ENCODE measurements at regions of chr16 and their contacts with region 1.

Region 1: GRCh38 chr16:15643048-15643945 is at the start of gene MARF1:
- DNase-seq: peak; percentile 99
- ATAC-seq: peak; percentile 80
- H3K4me3 Mint-ChIP-seq: peak within 1 kb of the TSS; percentile 92
- H3K27ac Mint-ChIP-seq: peak within 1 kb of the TSS; percentile 98
- H3K4me1 Mint-ChIP-seq: peaks cover 44% of the 10 kb centered on the region
- H3K27me3 Mint-ChIP-seq: no peaks in the 10 kb centered on the region
- CTCF ChIP-seq: peak; percentile 50
- total RNA-seq, gene MARF1: 55.7 to 56.0 TPM

Region 2: GRCh38 chr16:15427648-15428239 is 215.6 kb before region 1 on chr16:
- CTCF ChIA-PET with region 1: interaction called, 11 read pairs
- POLR2A ChIA-PET with region 1: no interaction called
- intact Hi-C with region 1: no loop called
- DNase-seq: peak; percentile 76
- ATAC-seq: peak; percentile 68
- H3K4me3 Mint-ChIP-seq: no peak overlapping the region
- H3K27ac Mint-ChIP-seq: no peak overlapping the region
- H3K4me1 Mint-ChIP-seq: peaks cover 3% of the 10 kb centered on the region
- H3K27me3 Mint-ChIP-seq: peaks cover 1% of the 10 kb centered on the region
- CTCF ChIP-seq: peak; percentile 66

Region 3: GRCh38 chr16:15518390-15519351 is 124.6 kb before region 1 on chr16:
- CTCF ChIA-PET with region 1: no interaction called
- POLR2A ChIA-PET with region 1: no interaction called
- intact Hi-C with region 1: no loop called
- DNase-seq: no peak
- ATAC-seq: no peak
- H3K4me3 Mint-ChIP-seq: no peak overlapping the region
- H3K27ac Mint-ChIP-seq: no peak overlapping the region
- H3K4me1 Mint-ChIP-seq: peaks cover 18% of the 10 kb centered on the region
- H3K27me3 Mint-ChIP-seq: no peaks in the 10 kb centered on the region
- CTCF ChIP-seq: no peak

Region 4: GRCh38 chr16:15592324-15592723 is 51.0 kb before region 1 on chr16:
- CTCF ChIA-PET with region 1: interaction called, 5 read pairs
- POLR2A ChIA-PET with region 1: interaction called, 3 read pairs
- intact Hi-C with region 1: loop called (anchors 5 kb)
- DNase-seq: peak; percentile 35
- ATAC-seq: no peak
- H3K4me3 Mint-ChIP-seq: no peak overlapping the region
- H3K27ac Mint-ChIP-seq: peak overlapping the region; percentile 75
- H3K4me1 Mint-ChIP-seq: peaks cover 46% of the 10 kb centered on the region
- H3K27me3 Mint-ChIP-seq: no peaks in the 10 kb centered on the region
- CTCF ChIP-seq: no peak

Region 5: DNA sequence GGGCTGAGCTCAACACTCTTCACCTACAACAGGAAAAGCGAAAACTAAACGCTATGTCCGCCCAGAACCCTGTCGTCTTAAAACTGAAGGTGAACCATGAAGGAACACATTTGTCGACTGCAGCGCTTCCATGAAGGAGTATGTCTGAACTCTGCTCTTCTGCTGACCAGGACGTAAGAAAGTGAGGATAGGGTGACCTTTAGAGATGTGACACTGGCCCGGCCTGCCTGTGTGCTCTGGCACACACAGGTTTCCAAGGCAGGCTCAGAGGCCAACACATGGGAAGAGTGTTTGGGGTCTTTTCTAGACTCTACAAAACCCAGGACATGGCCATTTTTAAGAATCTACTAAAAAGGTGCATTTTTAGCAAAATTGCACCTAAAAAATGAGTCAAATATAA is 21.4 kb before region 1 on chr16:
- CTCF ChIA-PET with region 1: no interaction called
- POLR2A ChIA-PET with region 1: no interaction called
- intact Hi-C with region 1: no loop called
- DNase-seq: no peak
- ATAC-seq: no peak
- H3K4me3 Mint-ChIP-seq: no peak overlapping the region
- H3K27ac Mint-ChIP-seq: no peak overlapping the region
- H3K4me1 Mint-ChIP-seq: peaks cover 7% of the 10 kb centered on the region
- H3K27me3 Mint-ChIP-seq: no peaks in the 10 kb centered on the region
- CTCF ChIP-seq: no peak

Region 6: DNA sequence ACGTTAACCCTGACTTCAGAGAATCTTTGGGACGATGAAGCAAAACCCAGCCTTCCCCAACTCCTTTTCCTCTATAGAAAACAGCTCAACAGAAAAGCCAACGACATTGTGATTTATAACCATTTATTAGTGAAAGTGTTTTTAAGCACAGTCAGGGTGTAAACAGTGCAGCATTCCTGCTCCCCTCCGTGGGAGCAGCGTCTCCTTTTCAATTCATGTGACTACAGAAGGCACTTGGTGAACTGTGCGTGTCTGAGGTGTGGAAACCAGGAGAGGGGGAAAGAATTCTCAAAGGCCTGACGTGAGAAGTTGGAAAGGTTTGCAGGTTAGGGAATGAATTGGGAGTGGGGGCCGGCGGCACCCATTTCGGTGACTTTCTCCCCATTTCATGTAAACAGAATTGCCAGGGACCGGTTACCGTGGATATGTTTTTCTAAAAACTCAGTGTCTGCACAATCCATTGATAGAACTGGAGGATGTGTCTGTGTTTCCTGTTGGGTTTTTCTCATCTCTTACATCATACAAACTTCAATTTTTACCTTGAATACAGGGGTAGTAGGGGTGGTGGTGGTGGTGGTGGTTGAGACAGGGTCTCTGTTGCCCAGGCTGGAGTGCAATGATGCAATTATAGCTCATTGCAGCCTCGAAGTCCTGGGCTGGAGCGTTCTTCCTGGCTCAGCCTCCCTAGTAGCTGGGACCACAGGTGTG is 59.9 kb after region 1 on chr16:
- CTCF ChIA-PET with region 1: no interaction called
- POLR2A ChIA-PET with region 1: no interaction called
- intact Hi-C with region 1: no loop called
- DNase-seq: no peak
- ATAC-seq: no peak
- H3K4me3 Mint-ChIP-seq: no peak overlapping the region
- H3K27ac Mint-ChIP-seq: peak overlapping the region; percentile 58
- H3K4me1 Mint-ChIP-seq: peaks cover 15% of the 10 kb centered on the region
- H3K27me3 Mint-ChIP-seq: no peaks in the 10 kb centered on the region
- CTCF ChIP-seq: no peak

Region 7: DNA sequence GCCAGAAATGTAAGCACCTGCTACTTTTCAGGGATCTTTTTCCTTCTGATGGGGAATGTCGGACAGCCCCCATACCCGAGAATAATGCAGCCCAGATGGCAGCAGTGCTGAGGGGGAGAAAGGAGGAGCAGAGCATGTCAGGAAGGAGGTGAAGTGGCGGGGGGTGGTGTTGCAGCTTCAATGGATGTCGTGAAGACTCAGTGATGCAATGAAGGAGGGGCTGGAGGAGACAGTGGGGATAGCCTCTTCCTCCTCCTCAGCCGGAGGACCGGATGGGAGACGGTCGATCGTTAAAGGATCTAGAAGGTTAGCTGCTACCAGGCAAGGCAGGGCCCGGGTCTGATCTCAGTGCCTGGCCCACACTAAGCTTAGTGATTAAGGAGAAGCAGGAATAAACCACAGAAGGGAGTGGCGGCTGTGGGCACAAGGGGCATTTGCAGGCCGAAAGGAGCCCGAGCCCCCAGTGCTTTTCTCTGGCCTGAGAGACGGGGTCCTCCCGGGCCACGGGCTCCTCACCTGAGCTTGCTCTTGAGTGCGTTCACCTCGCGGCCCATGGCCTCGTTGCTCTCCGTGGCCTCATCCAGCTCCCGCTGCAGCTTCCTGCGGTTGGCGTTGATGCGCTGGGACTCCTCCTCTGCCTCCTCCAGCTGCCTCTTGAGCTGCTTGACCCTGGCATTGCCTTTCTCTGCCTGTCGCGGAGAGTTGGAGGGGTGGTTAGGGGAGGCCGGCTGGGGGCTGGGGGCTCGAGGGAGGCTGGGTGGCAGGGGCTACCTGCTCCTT is 71.3 kb after region 1 on chr16:
- CTCF ChIA-PET with region 1: no interaction called
- POLR2A ChIA-PET with region 1: no interaction called
- intact Hi-C with region 1: no loop called
- DNase-seq: no peak
- ATAC-seq: no peak
- H3K4me3 Mint-ChIP-seq: no peak overlapping the region
- H3K27ac Mint-ChIP-seq: no peak overlapping the region
- H3K4me1 Mint-ChIP-seq: no peaks in the 10 kb centered on the region
- H3K27me3 Mint-ChIP-seq: no peaks in the 10 kb centered on the region
- CTCF ChIP-seq: no peak